Natural killer cell (primary cell): ENCODE measurements at regions of chr12 and their contacts with region 1.

Region 1: GRCh38 chr12:27014085-27014858 is at the start of gene TM7SF3:
- DNase-seq: peak; percentile 95 to 98
- ATAC-seq: peak; percentile 90 to 98 (median 91)
- H3K4me3 ChIP-seq: peak within 1 kb of the TSS; percentile 93
- H3K4me3 Mint-ChIP-seq: peak within 1 kb of the TSS; percentile 89
- H3K27ac ChIP-seq: peak within 1 kb of the TSS; percentile 94
- H3K27ac Mint-ChIP-seq: peak within 1 kb of the TSS; percentile 95 to 100
- H3K4me1 ChIP-seq: peaks cover 20% of the 10 kb centered on the region
- H3K4me1 Mint-ChIP-seq: peaks cover 39 to 45% of the 10 kb centered on the region in 2 donors
- H3K27me3 ChIP-seq: no peaks in the 10 kb centered on the region
- H3K27me3 Mint-ChIP-seq: no peaks in the 10 kb centered on the region
- CTCF ChIP-seq: peak; percentile 96
- total RNA-seq, gene TM7SF3: 32.1 to 48.4 (median 42.6) TPM

Region 2: GRCh38 chr12:26832822-26833742 is 181.2 kb before region 1 on chr12 and contains the start of gene ITPR2:
- intact Hi-C with region 1: loop called (anchors 2 kb)
- DNase-seq: peak; percentile 89 to 94
- ATAC-seq: peak; percentile 89 to 96 (median 90)
- H3K4me3 ChIP-seq: peak within 1 kb of the TSS; percentile 90
- H3K4me3 Mint-ChIP-seq: peak within 1 kb of the TSS; percentile 97
- H3K27ac ChIP-seq: peak within 1 kb of the TSS; percentile 97
- H3K27ac Mint-ChIP-seq: peak within 1 kb of the TSS; percentile 97 to 98
- H3K4me1 ChIP-seq: peaks cover 17% of the 10 kb centered on the region
- H3K4me1 Mint-ChIP-seq: peaks cover 45 to 47% of the 10 kb centered on the region in 2 donors
- H3K27me3 ChIP-seq: no peaks in the 10 kb centered on the region
- H3K27me3 Mint-ChIP-seq: no peaks in the 10 kb centered on the region
- CTCF ChIP-seq: peak; percentile 22
- total RNA-seq, gene ITPR2: 59.1 to 70.7 (median 68.2) TPM

Region 3: GRCh38 chr12:26937875-26938700 is 76.2 kb before region 1 on chr12 and contains the starts of genes FGFR1OP2 and INTS13:
- intact Hi-C with region 1: loop called (anchors 1 kb)
- DNase-seq: peak; percentile 92 to 98
- ATAC-seq: peak; percentile 90 to 97 (median 93)
- H3K4me3 ChIP-seq: peak within 1 kb of the TSS; percentile 95
- H3K4me3 Mint-ChIP-seq: peak within 1 kb of the TSS; percentile 96
- H3K27ac ChIP-seq: peak within 1 kb of the TSS; percentile 95
- H3K27ac Mint-ChIP-seq: peak within 1 kb of the TSS; percentile 93 to 94
- H3K4me1 ChIP-seq: peaks cover 12% of the 10 kb centered on the region
- H3K4me1 Mint-ChIP-seq: peaks cover 79 to 82% of the 10 kb centered on the region in 2 donors
- H3K27me3 ChIP-seq: no peaks in the 10 kb centered on the region
- H3K27me3 Mint-ChIP-seq: no peaks in the 10 kb centered on the region
- CTCF ChIP-seq: no peak
- total RNA-seq, gene FGFR1OP2: 43.3 to 59.9 (median 45.3) TPM
- total RNA-seq, gene INTS13: 17.5 to 20.8 (median 19.8) TPM

Region 4: GRCh38 chr12:27243804-27244683 is 229.8 kb after region 1 on chr12 and contains the start of gene STK38L:
- intact Hi-C with region 1: loop called (anchors 1 kb)
- DNase-seq: peak; percentile 98
- ATAC-seq: peak; percentile 96 to 99 (median 96)
- H3K4me3 ChIP-seq: peak within 1 kb of the TSS; percentile 98
- H3K4me3 Mint-ChIP-seq: peak within 1 kb of the TSS; percentile 98
- H3K27ac ChIP-seq: peak within 1 kb of the TSS; percentile 90
- H3K27ac Mint-ChIP-seq: peak within 1 kb of the TSS; percentile 92 to 94
- H3K4me1 ChIP-seq: peaks cover 15% of the 10 kb centered on the region
- H3K4me1 Mint-ChIP-seq: peaks cover 32% of the 10 kb centered on the region in 2 donors
- H3K27me3 ChIP-seq: no peaks in the 10 kb centered on the region
- H3K27me3 Mint-ChIP-seq: no peaks in the 10 kb centered on the region
- CTCF ChIP-seq: no peak
- total RNA-seq, gene STK38L: 14.0 to 17.0 (median 15.0) TPM